Activated naive CD4-positive, alpha-beta T cell treated with anti-CD3 and anti-CD28 coated beads for 36 hours (primary cell): ENCODE measurements at regions of chrX and their contacts with region 1.

Region 1: DNA sequence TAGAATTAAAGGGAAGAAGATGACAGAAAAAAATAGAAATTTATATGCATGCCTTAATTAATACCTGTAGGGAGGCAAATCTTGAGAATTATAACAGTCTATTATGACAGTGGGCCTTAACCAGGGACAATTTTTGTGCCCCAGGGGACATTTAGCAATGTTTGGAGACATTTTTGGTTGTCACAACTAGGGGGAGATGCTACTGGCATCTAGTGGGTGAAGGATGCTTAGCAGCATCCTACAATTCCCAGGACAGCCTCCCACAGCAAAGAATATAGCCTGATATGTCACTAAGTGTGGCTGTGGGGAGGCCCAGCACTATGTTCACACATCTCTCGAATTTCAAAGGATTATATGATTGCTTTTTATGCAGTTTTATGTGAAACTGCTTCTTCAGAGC is 10.5 kb downstream of the GPR82 start:
- DNase-seq: peak; percentile 12
- H3K4me3 Mint-ChIP-seq: no peak overlapping the region
- H3K27ac Mint-ChIP-seq: peak overlapping the region; percentile 26
- H3K4me1 Mint-ChIP-seq: peaks cover 19% of the 10 kb centered on the region
- H3K27me3 Mint-ChIP-seq: no peaks in the 10 kb centered on the region

Region 2: DNA sequence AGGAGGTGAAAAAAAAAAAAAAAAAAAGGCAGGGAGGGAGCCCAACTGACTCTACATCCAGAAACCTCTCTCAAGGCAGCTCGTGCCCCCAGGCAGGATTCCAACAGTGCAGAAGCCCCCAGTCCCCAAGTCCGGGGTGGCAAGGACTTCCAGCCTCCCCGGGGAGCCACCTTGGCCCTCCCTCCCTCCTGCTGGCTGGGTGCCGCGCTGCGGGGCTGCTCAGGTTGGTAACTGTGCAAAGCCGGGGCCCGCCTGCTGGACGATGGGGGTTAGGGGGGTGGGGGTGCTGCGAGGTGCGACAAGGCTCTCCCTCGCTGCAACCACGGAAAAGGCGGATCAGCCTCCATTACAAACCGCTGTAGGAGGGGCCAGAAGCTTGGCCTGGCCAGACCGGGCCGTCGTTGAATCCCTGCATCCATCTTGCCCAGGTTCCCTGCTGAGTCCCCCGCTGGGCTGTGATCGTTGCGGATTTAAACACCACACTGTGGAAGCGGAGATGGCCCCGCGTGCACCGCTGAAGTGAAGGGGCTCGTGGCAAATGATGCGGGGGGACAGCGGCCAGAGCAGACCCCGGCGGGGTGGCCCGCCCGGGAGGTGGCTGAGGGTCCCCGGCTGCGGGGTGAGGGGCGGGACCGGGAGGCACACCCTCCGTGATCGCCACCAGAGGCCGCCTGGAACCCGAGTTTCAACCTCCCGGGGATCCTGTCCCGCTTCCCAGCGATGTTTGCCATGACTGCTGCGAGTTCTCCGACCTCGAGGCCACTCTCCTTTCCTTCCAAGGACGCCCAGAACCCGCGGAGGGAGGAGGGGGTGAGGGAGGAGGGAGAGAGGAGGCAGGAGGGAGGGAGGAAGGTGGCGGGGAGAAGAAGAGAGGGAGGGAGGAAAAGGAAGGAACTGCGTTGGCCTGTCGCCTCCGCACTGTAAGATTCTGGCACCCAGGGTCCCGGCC is 458.6 kb before region 1 on chrX:
- CTCF ChIA-PET with region 1: no interaction called
- intact Hi-C with region 1: loop called (anchors 10 kb)
- DNase-seq: peak; percentile 73
- H3K4me3 Mint-ChIP-seq: peak overlapping the region; percentile 74
- H3K27ac Mint-ChIP-seq: peak overlapping the region; percentile 41
- H3K4me1 Mint-ChIP-seq: peaks cover 7% of the 10 kb centered on the region
- H3K27me3 Mint-ChIP-seq: no peaks in the 10 kb centered on the region

Region 3: GRCh38 chrX:41302365-41302764 is 432.2 kb before region 1 on chrX:
- CTCF ChIA-PET with region 1: no interaction called
- intact Hi-C with region 1: no loop called
- DNase-seq: no peak
- H3K4me3 Mint-ChIP-seq: no peak overlapping the region
- H3K27ac Mint-ChIP-seq: no peak overlapping the region
- H3K4me1 Mint-ChIP-seq: no peaks in the 10 kb centered on the region
- H3K27me3 Mint-ChIP-seq: no peaks in the 10 kb centered on the region

Region 4: GRCh38 chrX:41561045-41561444 is 173.5 kb before region 1 on chrX:
- CTCF ChIA-PET with region 1: interaction called, 4 read pairs
- intact Hi-C with region 1: loop called (anchors 1 kb)
- DNase-seq: peak; percentile 56
- H3K4me3 Mint-ChIP-seq: no peak overlapping the region
- H3K27ac Mint-ChIP-seq: peak overlapping the region; percentile 41
- H3K4me1 Mint-ChIP-seq: peaks cover 28% of the 10 kb centered on the region
- H3K27me3 Mint-ChIP-seq: no peaks in the 10 kb centered on the region

Region 5: GRCh38 chrX:41666251-41666650 is 68.3 kb before region 1 on chrX:
- CTCF ChIA-PET with region 1: no interaction called
- intact Hi-C with region 1: loop called (anchors 2 kb)
- DNase-seq: peak; percentile 6
- H3K4me3 Mint-ChIP-seq: no peak overlapping the region
- H3K27ac Mint-ChIP-seq: peak overlapping the region; percentile 71
- H3K4me1 Mint-ChIP-seq: peaks cover 43% of the 10 kb centered on the region
- H3K27me3 Mint-ChIP-seq: no peaks in the 10 kb centered on the region

Region 6: GRCh38 chrX:41759817-41760216 is 25.3 kb after region 1 on chrX:
- CTCF ChIA-PET with region 1: interaction called, 3 read pairs
- intact Hi-C with region 1: loop called (anchors 1 kb)
- DNase-seq: no peak
- H3K4me3 Mint-ChIP-seq: no peak overlapping the region
- H3K27ac Mint-ChIP-seq: no peak overlapping the region
- H3K4me1 Mint-ChIP-seq: peaks cover 3% of the 10 kb centered on the region
- H3K27me3 Mint-ChIP-seq: no peaks in the 10 kb centered on the region

Region 7: DNA sequence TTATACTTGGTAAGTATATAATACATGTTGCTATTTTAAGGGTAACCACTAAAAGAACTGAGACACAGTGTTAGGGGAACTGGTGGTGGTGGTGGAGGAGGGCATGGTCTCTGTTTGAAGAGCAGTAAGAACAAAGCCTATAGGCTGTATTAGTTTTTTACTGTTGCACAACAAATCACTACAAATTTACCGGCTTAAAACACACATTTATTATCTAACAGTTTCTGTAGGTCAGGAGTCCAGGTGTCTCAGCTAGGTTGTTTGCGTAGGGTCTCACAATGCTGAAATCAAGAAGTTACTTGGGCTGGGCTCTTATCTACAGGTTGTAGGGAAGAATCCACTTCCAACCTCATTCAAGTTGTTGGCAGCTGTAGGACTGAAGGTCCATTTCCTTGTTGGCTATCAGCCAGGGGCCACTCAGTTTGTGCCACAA is 136.2 kb after region 1 on chrX:
- CTCF ChIA-PET with region 1: no interaction called
- intact Hi-C with region 1: no loop called
- DNase-seq: no peak
- H3K4me3 Mint-ChIP-seq: no peak overlapping the region
- H3K27ac Mint-ChIP-seq: no peak overlapping the region
- H3K4me1 Mint-ChIP-seq: peaks cover 36% of the 10 kb centered on the region
- H3K27me3 Mint-ChIP-seq: no peaks in the 10 kb centered on the region